Left cardiac atrium (tissue), 4 donors: ENCODE measurements at regions of chrX and their contacts with region 1.

Region 1: GRCh38 chrX:29215251-29215650 is 628.0 kb downstream of the IL1RAPL1 start:
- DNase-seq: no peak
- ATAC-seq: no peak

Region 2: GRCh38 chrX:29359276-29359675 is 144.0 kb after region 1 on chrX:
- intact Hi-C with region 1: loop called in 1 of 2 experiments (anchors 5 kb)
- DNase-seq: no peak
- ATAC-seq: peak; percentile 16 to 65

Region 3: DNA sequence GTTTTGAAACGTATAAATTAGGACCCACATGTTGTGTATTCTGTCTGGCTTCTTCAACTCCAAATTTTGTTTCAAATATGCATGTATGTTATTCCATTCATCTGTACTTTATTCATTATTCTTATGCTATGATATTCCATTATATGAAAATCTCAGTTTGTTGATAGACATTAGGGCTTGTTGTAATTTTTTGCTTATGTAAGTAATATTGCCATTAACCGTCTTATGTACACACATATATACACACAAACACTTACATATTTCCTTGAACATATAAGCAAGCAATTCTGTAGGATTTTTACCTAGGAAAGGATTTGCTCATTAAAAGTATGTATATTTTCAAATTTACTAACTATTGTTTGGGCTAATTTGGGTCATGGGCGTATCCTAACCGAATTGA is 192.1 kb after region 1 on chrX:
- intact Hi-C with region 1: no loop called
- DNase-seq: no peak
- ATAC-seq: no peak